PC-9 (cell line): ENCODE measurements at regions of chr4 and their contacts with region 1.

Region 1: GRCh38 chr4:157128395-157128794 is 52.4 kb downstream of the GLRB start:
- DNase-seq: peak; percentile 37 to 43
- H3K4me3 ChIP-seq: no peak overlapping the region
- H3K27ac ChIP-seq: no peak overlapping the region
- H3K4me1 ChIP-seq: no peaks in the 10 kb centered on the region
- H3K27me3 ChIP-seq: no peaks in the 10 kb centered on the region
- CTCF ChIP-seq: peak; percentile 57

Region 2: DNA sequence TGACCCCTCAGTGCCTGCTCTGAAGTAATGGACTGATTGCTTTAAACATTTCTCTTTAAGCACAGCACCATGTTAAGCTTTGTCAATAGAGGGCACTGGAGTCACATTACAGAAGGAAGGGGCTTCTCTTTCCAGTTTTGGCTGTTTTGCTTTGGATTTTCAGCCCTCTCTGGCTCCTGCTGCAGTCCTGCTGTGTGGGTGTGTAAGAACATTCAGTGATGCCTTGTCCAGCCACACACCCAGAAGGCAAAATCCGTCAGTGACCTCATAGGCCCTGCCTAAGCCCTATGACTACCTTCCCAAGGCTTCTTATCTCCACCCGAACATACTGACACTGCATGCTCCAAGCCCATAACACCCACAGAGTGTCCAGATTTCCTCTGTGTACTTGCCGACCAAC is 959.4 kb before region 1 on chr4:
- CTCF ChIA-PET with region 1: no interaction called
- POLR2A ChIA-PET with region 1: no interaction called
- intact Hi-C with region 1: loop called (anchors 1 kb)
- DNase-seq: peak in 1 of 2 experiments; percentile 28
- H3K4me3 ChIP-seq: no peak overlapping the region
- H3K27ac ChIP-seq: no peak overlapping the region
- H3K4me1 ChIP-seq: no peaks in the 10 kb centered on the region
- H3K27me3 ChIP-seq: no peaks in the 10 kb centered on the region
- CTCF ChIP-seq: peak; percentile 43; the same call in 1 of the 2 replicates

Region 3: DNA sequence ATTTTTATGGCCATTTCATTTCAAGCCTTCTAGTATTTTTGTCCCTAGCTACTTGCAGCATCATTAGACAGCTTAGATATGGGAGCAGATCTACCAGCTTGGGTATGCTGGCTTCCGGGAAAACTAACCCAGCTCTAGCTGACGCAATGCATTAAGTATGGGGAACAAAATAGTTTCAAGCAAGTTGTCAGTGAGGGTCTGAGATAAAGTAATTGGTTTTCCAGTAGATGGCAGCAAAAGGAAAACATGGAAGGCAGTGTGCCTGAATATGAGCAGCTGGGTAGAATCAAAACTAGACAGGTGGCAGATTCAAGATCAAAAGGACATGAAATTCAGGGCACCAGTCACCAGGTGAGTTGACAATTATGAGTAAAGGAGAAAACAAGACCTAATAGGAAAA is 833.8 kb before region 1 on chr4:
- CTCF ChIA-PET with region 1: no interaction called
- POLR2A ChIA-PET with region 1: no interaction called
- intact Hi-C with region 1: loop called (anchors 5 kb)
- DNase-seq: peak; percentile 37 to 44
- H3K4me3 ChIP-seq: no peak overlapping the region
- H3K27ac ChIP-seq: no peak overlapping the region
- H3K4me1 ChIP-seq: no peaks in the 10 kb centered on the region
- H3K27me3 ChIP-seq: no peaks in the 10 kb centered on the region
- CTCF ChIP-seq: no peak

Region 4: DNA sequence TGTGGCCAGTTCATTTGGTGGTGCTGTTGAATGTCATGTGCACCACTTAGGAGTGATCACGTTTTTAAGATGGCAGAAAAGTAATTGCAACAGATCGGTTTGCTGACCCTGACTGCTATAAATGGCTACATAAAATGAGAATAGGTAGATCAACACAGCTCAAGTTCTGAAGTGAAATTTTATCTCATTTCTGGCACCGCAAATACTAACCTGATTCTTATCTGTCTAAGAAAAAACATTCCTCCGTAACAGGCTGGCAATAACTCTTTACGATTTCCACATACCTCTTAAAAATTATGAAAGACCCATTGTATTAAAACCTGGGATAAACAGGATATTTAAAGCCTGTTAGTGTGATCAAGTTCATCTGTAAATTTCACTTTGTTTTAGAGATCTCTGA is 544.3 kb before region 1 on chr4:
- CTCF ChIA-PET with region 1: no interaction called
- POLR2A ChIA-PET with region 1: no interaction called
- intact Hi-C with region 1: loop called (anchors 5 kb)
- DNase-seq: peak; percentile 8 to 67
- H3K4me3 ChIP-seq: no peak overlapping the region
- H3K27ac ChIP-seq: peak overlapping the region; percentile 29
- H3K4me1 ChIP-seq: peaks cover 10% of the 10 kb centered on the region
- H3K27me3 ChIP-seq: no peaks in the 10 kb centered on the region
- CTCF ChIP-seq: no peak

Region 5: DNA sequence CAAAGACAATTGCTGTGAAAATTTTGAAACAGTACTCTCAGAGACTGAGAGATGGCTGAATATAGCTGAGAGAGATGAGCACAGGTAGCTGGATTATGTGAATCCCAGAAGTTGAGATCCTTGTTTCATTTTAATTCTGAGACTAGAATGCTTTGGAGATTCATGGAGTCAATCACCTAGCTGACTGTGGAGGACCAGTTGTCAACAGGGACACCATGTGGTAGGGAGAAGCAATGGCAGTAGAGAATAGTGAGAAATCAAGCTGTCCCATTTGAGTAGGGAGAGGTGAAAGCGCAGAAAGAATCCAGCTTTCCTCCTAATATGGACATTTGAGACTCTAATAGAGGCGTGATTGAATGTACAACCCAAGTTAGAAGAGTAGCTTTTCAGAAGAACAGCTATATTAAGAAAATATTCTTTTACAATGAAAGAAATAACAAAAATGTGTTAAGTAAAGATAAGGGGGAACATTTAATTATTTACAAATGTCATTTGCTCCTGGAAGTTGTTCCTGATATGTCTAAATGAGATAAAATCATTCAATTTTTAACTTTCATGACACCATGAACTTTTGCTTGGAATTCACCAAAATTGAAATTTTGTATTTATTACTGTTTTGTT is 82.8 kb before region 1 on chr4:
- CTCF ChIA-PET with region 1: no interaction called
- POLR2A ChIA-PET with region 1: no interaction called
- intact Hi-C with region 1: loop called (anchors 1 kb)
- DNase-seq: peak; percentile 25 to 52
- H3K4me3 ChIP-seq: no peak overlapping the region
- H3K27ac ChIP-seq: no peak overlapping the region
- H3K4me1 ChIP-seq: no peaks in the 10 kb centered on the region
- H3K27me3 ChIP-seq: no peaks in the 10 kb centered on the region
- CTCF ChIP-seq: peak; percentile 70

Region 6: DNA sequence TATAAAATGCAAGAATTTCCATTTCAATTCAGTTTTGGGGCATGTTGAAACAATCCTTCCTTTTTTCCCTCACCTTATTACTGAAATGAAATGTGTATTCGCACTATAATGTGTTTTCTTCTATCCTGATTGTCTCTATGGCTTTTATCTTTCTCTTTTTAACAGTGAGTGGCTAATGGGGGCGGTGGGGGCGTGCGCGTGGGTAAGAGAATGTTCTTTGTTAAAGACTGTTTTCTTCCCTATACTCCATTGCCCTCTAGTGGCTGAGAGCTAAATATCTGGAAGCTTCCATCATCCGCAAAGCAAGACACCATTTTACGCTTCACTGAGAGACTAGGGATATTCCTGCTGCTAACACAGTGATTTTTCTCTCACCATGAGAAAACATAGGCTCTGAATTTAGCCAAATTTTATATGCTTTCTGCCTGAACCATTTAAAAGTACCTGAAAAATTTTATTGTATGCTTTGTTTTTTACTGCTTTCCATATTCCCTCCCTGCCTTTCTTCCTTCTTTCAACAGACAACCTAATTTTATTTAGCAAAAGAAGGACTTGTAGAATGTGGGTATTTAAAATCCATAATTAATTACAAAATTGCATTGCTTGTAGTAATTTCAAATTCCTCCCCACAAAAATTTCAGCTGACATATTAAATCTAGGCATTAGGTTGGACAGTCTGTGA is 850.4 kb after region 1 on chr4:
- CTCF ChIA-PET with region 1: no interaction called
- POLR2A ChIA-PET with region 1: no interaction called
- intact Hi-C with region 1: loop called (anchors 5 kb)
- DNase-seq: peak in 1 of 2 experiments; percentile 22
- H3K4me3 ChIP-seq: no peak overlapping the region
- H3K27ac ChIP-seq: no peak overlapping the region
- H3K4me1 ChIP-seq: no peaks in the 10 kb centered on the region
- H3K27me3 ChIP-seq: no peaks in the 10 kb centered on the region
- CTCF ChIP-seq: peak; percentile 90